Aorta (tissue), 5 donors: ENCODE measurements at regions of chr20 and their contacts with region 1.

Region 1: DNA sequence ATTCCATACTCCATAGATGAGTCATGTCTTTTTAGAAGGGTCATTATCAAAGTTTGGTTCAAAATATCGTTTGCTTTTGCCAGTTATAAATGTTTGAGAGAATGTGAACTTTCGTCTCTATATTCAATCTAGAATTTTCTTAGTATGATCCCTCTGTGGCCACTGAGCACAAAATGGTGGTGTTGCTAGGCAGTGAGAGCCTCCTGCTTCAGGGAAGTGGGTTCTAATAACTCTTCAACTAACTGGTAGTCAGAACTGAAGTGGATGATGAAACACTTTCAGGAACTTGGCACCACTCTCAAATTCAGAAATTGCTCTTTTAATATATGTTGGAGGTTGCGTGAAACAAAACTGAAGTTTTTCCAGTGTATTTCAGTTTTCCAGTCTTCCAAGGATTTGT is 125.0 kb upstream of the DOK5 start:
- DNase-seq: no peak
- ATAC-seq: no peak
- H3K4me3 ChIP-seq: no peak overlapping the region
- H3K27ac ChIP-seq: no peak overlapping the region
- H3K4me1 ChIP-seq: peaks cover 0 to 4% of the 10 kb centered on the region in 2 donors
- H3K27me3 ChIP-seq: no peaks in the 10 kb centered on the region

Region 2: DNA sequence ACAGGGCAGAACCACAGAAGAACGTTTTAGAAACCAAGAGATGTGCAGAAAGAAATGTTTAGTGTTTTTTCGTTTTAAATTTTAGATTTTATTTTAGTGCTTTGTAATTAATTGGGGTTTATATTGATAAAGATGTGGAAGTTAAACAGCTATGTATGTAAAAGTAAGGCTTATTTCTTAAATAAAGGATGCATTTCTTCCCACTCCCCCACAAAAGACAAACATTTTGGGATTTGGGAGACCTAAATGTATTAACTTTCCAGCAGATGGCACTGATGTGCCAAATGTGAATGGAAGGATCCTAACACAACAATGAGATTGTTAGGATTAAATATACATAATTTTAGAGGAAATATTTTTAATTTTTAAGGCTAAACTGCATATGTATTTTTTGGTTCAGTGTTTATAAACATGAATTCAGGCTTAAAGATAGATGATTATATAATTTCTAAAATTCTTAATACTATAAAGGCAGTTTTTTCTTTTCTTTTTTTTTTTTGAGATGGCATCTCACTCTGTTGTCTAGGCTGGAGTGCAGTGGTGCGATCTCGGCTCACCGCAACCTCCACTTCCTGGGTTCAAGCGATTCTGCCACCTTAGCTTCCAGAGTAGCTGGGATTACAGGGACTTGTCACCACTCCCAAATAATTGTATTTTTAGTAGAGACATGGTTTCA is 130.5 kb before region 1 on chr20:
- intact Hi-C with region 1: loop called in 1 of 2 experiments (anchors 5 kb)
- DNase-seq: no peak
- ATAC-seq: no peak
- H3K4me3 ChIP-seq: no peak overlapping the region
- H3K27ac ChIP-seq: no peak overlapping the region
- H3K4me1 ChIP-seq: peaks cover 2 to 5% of the 10 kb centered on the region in 2 donors
- H3K27me3 ChIP-seq: no peaks in the 10 kb centered on the region

Region 3: DNA sequence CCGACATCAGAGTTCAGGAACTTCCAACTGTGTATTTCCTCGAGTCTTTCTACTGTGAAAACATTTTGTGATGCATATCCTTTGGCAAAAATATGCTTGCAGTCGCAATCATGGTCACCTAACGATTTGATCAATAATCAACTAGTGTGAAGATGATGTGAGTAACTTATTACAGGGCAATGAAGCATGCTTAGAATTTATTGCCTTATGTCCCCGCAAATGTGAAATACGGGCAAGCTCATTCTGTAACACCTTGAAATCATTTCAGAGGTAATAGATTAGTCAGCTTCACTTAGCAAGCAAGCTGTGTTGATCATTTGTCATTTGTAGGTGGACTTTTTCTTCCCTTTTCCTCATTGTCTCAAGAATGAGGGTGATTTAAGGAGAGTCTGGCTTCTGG is 57.0 kb after region 1 on chr20:
- intact Hi-C with region 1: no loop called
- DNase-seq: no peak
- ATAC-seq: no peak
- H3K4me3 ChIP-seq: no peak overlapping the region
- H3K27ac ChIP-seq: no peak overlapping the region
- H3K4me1 ChIP-seq: no peaks in the 10 kb centered on the region
- H3K27me3 ChIP-seq: no peaks in the 10 kb centered on the region